PC-9 (cell line): ENCODE measurements at regions of chr11 and their contacts with region 1.

Region 1: DNA sequence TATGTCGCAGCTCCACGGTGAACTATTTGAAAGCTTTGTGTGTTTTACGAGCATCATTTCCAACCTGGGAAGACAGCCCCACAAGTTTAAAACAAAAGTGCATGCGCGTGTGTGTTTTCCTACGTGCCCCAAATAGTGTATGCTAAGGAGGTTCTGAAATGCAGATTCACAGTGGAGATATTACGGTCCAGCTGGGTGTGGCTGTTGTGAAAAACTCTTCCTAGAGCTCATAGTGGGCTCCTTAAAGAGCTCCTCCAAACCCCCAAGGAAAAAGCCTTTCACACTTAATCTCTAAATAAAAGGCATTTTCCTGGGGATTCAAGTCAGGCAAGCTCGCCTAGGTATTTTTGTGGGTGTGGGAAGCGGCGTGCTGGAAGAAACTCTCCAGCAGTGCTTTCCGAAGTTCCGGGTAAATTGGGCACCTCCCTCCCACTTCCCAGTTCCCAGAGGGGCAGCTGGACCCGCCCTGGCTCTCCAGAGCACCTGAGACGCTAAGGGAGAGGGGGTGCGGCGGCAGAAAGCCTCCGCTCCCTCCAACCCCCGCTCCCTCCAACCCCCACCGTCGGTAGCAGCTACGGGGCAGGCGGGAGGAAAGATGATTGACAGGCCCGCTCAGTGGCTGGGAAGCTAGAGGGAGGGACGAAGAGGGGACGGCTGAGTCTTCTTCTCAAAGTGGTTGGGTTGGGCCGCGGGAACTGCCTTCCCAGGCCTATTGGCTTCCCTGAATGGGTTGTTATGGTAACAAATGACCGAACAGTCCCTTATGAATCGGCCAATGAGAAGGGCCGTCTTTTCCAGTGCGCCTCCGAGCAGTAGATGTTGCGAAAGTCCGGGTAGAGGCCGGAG is 558 bp upstream of the PCF11 start:
- DNase-seq: peak; percentile 96 to 100
- H3K4me3 ChIP-seq: peak overlapping the region; percentile 75
- H3K27ac ChIP-seq: peak overlapping the region; percentile 82
- H3K4me1 ChIP-seq: peaks cover 35% of the 10 kb centered on the region
- H3K27me3 ChIP-seq: no peaks in the 10 kb centered on the region
- CTCF ChIP-seq: no peak

Region 2: GRCh38 chr11:82790723-82791484 is 365.5 kb before region 1 on chr11:
- CTCF ChIA-PET with region 1: no interaction called
- POLR2A ChIA-PET with region 1: interaction called, 10 read pairs
- intact Hi-C with region 1: no loop called
- DNase-seq: no peak
- H3K4me3 ChIP-seq: no peak overlapping the region
- H3K27ac ChIP-seq: no peak overlapping the region
- H3K4me1 ChIP-seq: no peaks in the 10 kb centered on the region
- H3K27me3 ChIP-seq: no peaks in the 10 kb centered on the region
- CTCF ChIP-seq: no peak

Region 3: GRCh38 chr11:83071567-83072349 is 84.6 kb before region 1 on chr11 and contains the start of gene RAB30:
- CTCF ChIA-PET with region 1: no interaction called
- POLR2A ChIA-PET with region 1: interaction called, 3 read pairs
- intact Hi-C with region 1: loop called (anchors 1 kb)
- DNase-seq: peak; percentile 93 to 100
- H3K4me3 ChIP-seq: peak within 1 kb of the TSS; percentile 91
- H3K27ac ChIP-seq: peak within 1 kb of the TSS; percentile 66
- H3K4me1 ChIP-seq: peaks cover 39% of the 10 kb centered on the region
- H3K27me3 ChIP-seq: no peaks in the 10 kb centered on the region
- CTCF ChIP-seq: no peak
- total RNA-seq, gene RAB30: 3.2 and 3.6 TPM in 2 replicates

Region 4: GRCh38 chr11:83124636-83125424 is 31.5 kb before region 1 on chr11:
- CTCF ChIA-PET with region 1: no interaction called
- POLR2A ChIA-PET with region 1: interaction called, 12 read pairs
- intact Hi-C with region 1: no loop called
- DNase-seq: no peak
- H3K4me3 ChIP-seq: no peak overlapping the region
- H3K27ac ChIP-seq: no peak overlapping the region
- H3K4me1 ChIP-seq: no peaks in the 10 kb centered on the region
- H3K27me3 ChIP-seq: no peaks in the 10 kb centered on the region
- CTCF ChIP-seq: no peak

Region 5: GRCh38 chr11:83275888-83276641 is 119.7 kb after region 1 on chr11:
- CTCF ChIA-PET with region 1: no interaction called
- POLR2A ChIA-PET with region 1: interaction called, 12 read pairs
- intact Hi-C with region 1: no loop called
- DNase-seq: no peak
- H3K4me3 ChIP-seq: no peak overlapping the region
- H3K27ac ChIP-seq: no peak overlapping the region
- H3K4me1 ChIP-seq: no peaks in the 10 kb centered on the region
- H3K27me3 ChIP-seq: no peaks in the 10 kb centered on the region
- CTCF ChIP-seq: no peak